K562 (cell line): ENCODE measurements at regions of chrX and their contacts with region 1.

Region 1: GRCh38 chrX:110146521-110146920 is 143.6 kb downstream of the TMEM164 start:
- DNase-seq: peak; percentile 63 to 68 (median 64)
- ATAC-seq: peak; percentile 91
- H3K4me3 ChIP-seq: no peak overlapping the region
- H3K27ac ChIP-seq: no peak overlapping the region
- H3K4me1 ChIP-seq: peaks cover 4 to 7% of the 10 kb centered on the region in 2 experiments; a peak in 3 of 5 replicates
- H3K27me3 ChIP-seq: no peaks in the 10 kb centered on the region
- CTCF ChIP-seq: peak; percentile 68 to 79 (median 73)
- EP300 ChIP-seq: no peak
- POLR2A ChIP-seq: no peak
- RAD21 ChIP-seq: peak; percentile 44 to 71

Region 2: GRCh38 chrX:109714340-109714958 is 432.1 kb before region 1 on chrX:
- CTCF ChIA-PET with region 1: interaction called, 5 read pairs
- POLR2A ChIA-PET with region 1: no interaction called
- in situ Hi-C with region 1: no loop called
- intact Hi-C with region 1: loop called (anchors 10 kb)
- DNase-seq: no peak
- ATAC-seq: no peak; the same call in 2 of the 3 replicates
- H3K4me3 ChIP-seq: no peak overlapping the region
- H3K27ac ChIP-seq: no peak overlapping the region
- H3K4me1 ChIP-seq: no peaks in the 10 kb centered on the region; a peak in 2 of 5 replicates
- H3K27me3 ChIP-seq: no peaks in the 10 kb centered on the region
- CTCF ChIP-seq: no peak
- EP300 ChIP-seq: no peak
- POLR2A ChIP-seq: no peak
- RAD21 ChIP-seq: no peak

Region 3: GRCh38 chrX:109732780-109733657 is 413.5 kb before region 1 on chrX and contains the start of gene ACSL4:
- CTCF ChIA-PET with region 1: no interaction called
- POLR2A ChIA-PET with region 1: no interaction called
- in situ Hi-C with region 1: loop called (anchors 5 kb)
- intact Hi-C with region 1: no loop called
- DNase-seq: peak; percentile 88 to 91 (median 90)
- ATAC-seq: peak; percentile 95
- H3K4me3 ChIP-seq: peak within 1 kb of the TSS; percentile 95
- H3K27ac ChIP-seq: peak within 1 kb of the TSS; percentile 90
- H3K4me1 ChIP-seq: peaks cover 7 to 12% of the 10 kb centered on the region in 2 experiments; a peak in 3 of 5 replicates
- H3K27me3 ChIP-seq: no peaks in the 10 kb centered on the region
- CTCF ChIP-seq: no peak
- EP300 ChIP-seq: no peak; the same call in none of the 2 replicates
- POLR2A ChIP-seq: peak; percentile 78
- RAD21 ChIP-seq: no peak
- polyA plus RNA-seq, gene ACSL4: 9.8 to 12.0 TPM

Region 4: DNA sequence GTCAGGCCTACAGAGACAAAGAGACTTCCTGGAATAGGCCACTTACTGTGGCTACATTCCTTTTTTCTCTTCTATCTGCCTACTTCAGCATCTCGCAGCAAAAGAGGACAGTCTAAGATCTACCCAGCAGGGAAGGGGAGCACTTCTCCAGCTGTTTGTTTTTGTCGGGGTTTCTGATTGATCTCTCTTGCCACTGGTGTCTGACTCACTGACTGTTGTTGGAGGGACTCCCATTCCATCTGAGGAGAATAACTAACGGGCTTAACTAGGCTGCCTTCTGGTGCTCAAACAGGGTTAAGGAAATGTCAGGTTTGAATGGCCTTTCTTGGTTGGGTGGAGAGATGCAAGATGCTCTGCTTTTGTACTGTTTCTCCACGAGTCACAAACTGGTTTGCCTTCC is 243.9 kb before region 1 on chrX:
- CTCF ChIA-PET with region 1: no interaction called
- POLR2A ChIA-PET with region 1: no interaction called
- in situ Hi-C with region 1: loop called (anchors 10 kb)
- intact Hi-C with region 1: no loop called
- DNase-seq: no peak
- ATAC-seq: no peak
- H3K4me3 ChIP-seq: no peak overlapping the region
- H3K27ac ChIP-seq: no peak overlapping the region
- H3K4me1 ChIP-seq: no peaks in the 10 kb centered on the region
- H3K27me3 ChIP-seq: no peaks in the 10 kb centered on the region
- CTCF ChIP-seq: no peak
- EP300 ChIP-seq: no peak
- POLR2A ChIP-seq: no peak
- RAD21 ChIP-seq: no peak

Region 5: DNA sequence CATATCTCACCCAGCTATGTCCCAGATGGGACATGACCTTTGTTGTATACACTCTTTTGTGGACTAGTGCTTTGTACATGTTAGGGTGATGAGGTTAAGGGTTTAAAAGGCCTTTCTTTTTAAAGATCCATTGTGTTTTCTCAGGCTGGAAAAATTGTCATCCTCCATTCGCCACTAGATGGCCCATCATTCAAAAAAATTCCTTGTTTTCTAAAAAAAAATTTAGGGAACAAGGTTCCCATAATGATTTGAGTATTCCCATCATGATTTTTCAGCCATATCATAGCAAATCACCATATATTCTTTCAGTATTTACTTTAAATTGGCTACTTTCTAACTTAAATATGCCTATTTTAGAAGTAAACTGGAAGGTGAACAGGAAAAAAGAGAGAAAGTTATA is 235.5 kb before region 1 on chrX:
- CTCF ChIA-PET with region 1: interaction called, 10 read pairs
- POLR2A ChIA-PET with region 1: no interaction called
- in situ Hi-C with region 1: loop called (anchors 10 kb)
- intact Hi-C with region 1: loop called (anchors 2 kb)
- DNase-seq: no peak
- ATAC-seq: no peak
- H3K4me3 ChIP-seq: no peak overlapping the region
- H3K27ac ChIP-seq: no peak overlapping the region
- H3K4me1 ChIP-seq: peaks cover 0 to 4% of the 10 kb centered on the region in 2 experiments; a peak in 1 of 5 replicates
- H3K27me3 ChIP-seq: no peaks in the 10 kb centered on the region
- CTCF ChIP-seq: peak; percentile 13 to 62 (median 44); a peak in 3 of 6 replicates
- EP300 ChIP-seq: no peak
- POLR2A ChIP-seq: no peak
- RAD21 ChIP-seq: peak; percentile 60 to 74

Region 6: GRCh38 chrX:110046001-110046400 is 100.5 kb before region 1 on chrX:
- CTCF ChIA-PET with region 1: no interaction called
- POLR2A ChIA-PET with region 1: no interaction called
- in situ Hi-C with region 1: no loop called
- intact Hi-C with region 1: loop called (anchors 5 kb)
- DNase-seq: no peak
- ATAC-seq: peak; percentile 50; the same call in 2 of the 3 replicates
- H3K4me3 ChIP-seq: no peak overlapping the region
- H3K27ac ChIP-seq: no peak overlapping the region
- H3K4me1 ChIP-seq: no peaks in the 10 kb centered on the region; a peak in 1 of 5 replicates
- H3K27me3 ChIP-seq: no peaks in the 10 kb centered on the region
- CTCF ChIP-seq: no peak
- EP300 ChIP-seq: no peak
- POLR2A ChIP-seq: no peak
- RAD21 ChIP-seq: peak in 1 of 2 experiments; percentile 25; a peak in 1 of 4 replicates